ENCODE measurements at regions of chr6 and their contacts with region 1.

Region 1: GRCh38 chr6:26196846-26197648 is 109.8 kb downstream of the HFE start:
- DNase-seq: peak; percentile 75
- ATAC-seq: peak; percentile 41
- H3K4me3 ChIP-seq: peak overlapping the region; percentile 70 to 76
- H3K27ac ChIP-seq: peak overlapping the region; percentile 98
- H3K4me1 ChIP-seq: peaks cover 13 to 37% of the 10 kb centered on the region in 2 experiments
- H3K27me3 ChIP-seq: no peaks in the 10 kb centered on the region
- CTCF ChIP-seq: no peak
- POLR2A ChIP-seq: peak; percentile 92
- RAD21 ChIP-seq: no peak

Region 2: DNA sequence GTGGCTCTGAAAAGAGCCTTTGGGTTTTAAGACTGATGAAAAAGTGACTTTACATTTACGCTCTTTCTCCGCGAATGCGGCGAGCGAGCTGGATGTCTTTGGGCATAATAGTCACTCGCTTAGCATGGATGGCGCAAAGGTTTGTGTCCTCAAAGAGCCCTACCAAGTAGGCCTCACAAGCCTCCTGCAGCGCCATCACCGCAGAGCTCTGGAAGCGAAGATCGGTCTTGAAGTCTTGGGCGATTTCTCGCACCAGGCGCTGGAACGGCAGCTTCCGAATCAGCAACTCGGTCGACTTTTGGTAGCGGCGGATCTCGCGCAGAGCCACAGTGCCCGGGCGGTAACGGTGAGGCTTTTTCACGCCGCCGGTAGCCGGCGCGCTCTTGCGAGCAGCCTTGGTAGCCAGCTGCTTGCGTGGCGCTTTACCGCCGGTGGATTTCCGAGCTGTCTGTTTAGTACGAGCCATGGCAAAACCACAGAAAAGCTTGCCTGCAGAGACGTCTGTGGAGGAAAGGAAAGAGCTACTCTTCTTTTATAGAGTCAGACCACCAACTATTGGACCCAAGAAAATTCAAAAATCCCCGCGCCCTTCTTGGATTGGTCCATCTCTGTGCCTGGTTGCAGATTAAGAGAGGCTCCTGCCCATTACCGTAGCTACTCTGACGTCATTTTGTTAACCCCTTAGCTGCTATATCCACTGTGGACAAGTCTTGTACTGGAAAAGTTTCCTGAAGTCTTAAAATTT is 165.3 kb before region 1 on chr6:
- CTCF ChIA-PET with region 1: no interaction called
- POLR2A ChIA-PET with region 1: interaction called, 44 read pairs
- RAD21 ChIA-PET with region 1: no interaction called
- intact Hi-C with region 1: loop called (anchors 2 kb)
- DNase-seq: peak; percentile 99
- ATAC-seq: peak; percentile 66
- H3K4me3 ChIP-seq: peak overlapping the region; percentile 70 to 74
- H3K27ac ChIP-seq: peak overlapping the region; percentile 98
- H3K4me1 ChIP-seq: peaks cover 51 to 87% of the 10 kb centered on the region in 2 experiments
- H3K27me3 ChIP-seq: no peaks in the 10 kb centered on the region
- CTCF ChIP-seq: no peak
- POLR2A ChIP-seq: peak; percentile 99
- RAD21 ChIP-seq: peak; percentile 5; the same call in 1 of the 2 replicates

Region 3: GRCh38 chr6:26071135-26071534 is 125.9 kb before region 1 on chr6:
- CTCF ChIA-PET with region 1: no interaction called
- POLR2A ChIA-PET with region 1: no interaction called
- RAD21 ChIA-PET with region 1: no interaction called
- intact Hi-C with region 1: no loop called
- DNase-seq: no peak
- ATAC-seq: peak; percentile 85
- H3K4me3 ChIP-seq: peak overlapping the region in 1 of 2 experiments; percentile 25; a peak in 1 of 4 replicates
- H3K27ac ChIP-seq: no peak overlapping the region
- H3K4me1 ChIP-seq: peaks cover 16 to 29% of the 10 kb centered on the region in 2 experiments; a peak in 3 of 4 replicates
- H3K27me3 ChIP-seq: no peaks in the 10 kb centered on the region
- CTCF ChIP-seq: no peak
- POLR2A ChIP-seq: no peak
- RAD21 ChIP-seq: no peak

Region 4: DNA sequence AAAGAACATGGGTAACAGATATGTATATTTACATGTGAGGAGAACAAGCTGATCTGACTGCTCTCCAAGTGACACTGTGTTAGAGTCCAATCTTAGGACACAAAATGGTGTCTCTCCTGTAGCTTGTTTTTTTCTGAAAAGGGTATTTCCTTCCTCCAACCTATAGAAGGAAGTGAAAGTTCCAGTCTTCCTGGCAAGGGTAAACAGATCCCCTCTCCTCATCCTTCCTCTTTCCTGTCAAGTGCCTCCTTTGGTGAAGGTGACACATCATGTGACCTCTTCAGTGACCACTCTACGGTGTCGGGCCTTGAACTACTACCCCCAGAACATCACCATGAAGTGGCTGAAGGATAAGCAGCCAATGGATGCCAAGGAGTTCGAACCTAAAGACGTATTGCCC is 104.6 kb before region 1 on chr6:
- CTCF ChIA-PET with region 1: no interaction called
- POLR2A ChIA-PET with region 1: no interaction called
- RAD21 ChIA-PET with region 1: no interaction called
- intact Hi-C with region 1: no loop called
- DNase-seq: no peak
- ATAC-seq: no peak
- H3K4me3 ChIP-seq: no peak overlapping the region
- H3K27ac ChIP-seq: no peak overlapping the region
- H3K4me1 ChIP-seq: peaks cover 3 to 16% of the 10 kb centered on the region in 2 experiments; a peak in 2 of 4 replicates
- H3K27me3 ChIP-seq: no peaks in the 10 kb centered on the region
- CTCF ChIP-seq: no peak
- POLR2A ChIP-seq: no peak
- RAD21 ChIP-seq: no peak

Region 5: DNA sequence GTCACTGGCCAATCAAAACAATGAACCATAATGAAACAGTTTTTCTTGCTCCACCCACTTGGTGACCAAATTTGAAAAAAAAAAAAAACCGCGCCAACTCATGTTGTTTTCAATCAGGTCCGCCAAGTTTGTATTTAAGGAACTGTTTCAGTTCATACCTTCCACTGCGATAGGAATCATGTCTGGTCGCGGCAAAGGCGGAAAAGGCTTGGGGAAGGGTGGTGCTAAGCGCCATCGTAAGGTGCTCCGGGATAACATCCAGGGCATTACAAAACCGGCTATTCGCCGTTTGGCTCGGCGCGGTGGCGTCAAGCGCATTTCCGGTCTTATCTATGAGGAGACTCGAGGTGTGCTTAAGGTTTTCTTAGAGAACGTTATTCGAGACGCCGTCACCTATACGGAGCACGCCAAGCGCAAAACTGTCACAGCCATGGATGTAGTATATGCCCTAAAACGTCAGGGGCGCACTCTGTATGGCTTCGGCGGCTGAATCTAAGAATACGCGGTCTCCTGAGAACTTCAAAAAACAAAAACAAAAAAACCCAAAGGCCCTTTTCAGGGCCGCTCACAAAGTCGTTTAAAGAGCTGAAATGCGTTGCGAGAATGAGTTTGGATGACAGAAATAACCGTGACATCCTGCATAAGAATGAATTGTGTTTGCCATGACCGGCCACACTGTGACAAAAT is 93.1 kb before region 1 on chr6:
- CTCF ChIA-PET with region 1: no interaction called
- POLR2A ChIA-PET with region 1: interaction called, 13 read pairs
- RAD21 ChIA-PET with region 1: no interaction called
- intact Hi-C with region 1: no loop called
- DNase-seq: peak; percentile 95
- ATAC-seq: peak; percentile 74
- H3K4me3 ChIP-seq: peak overlapping the region; percentile 48 to 59
- H3K27ac ChIP-seq: peak overlapping the region; percentile 94
- H3K4me1 ChIP-seq: peaks cover 17 to 39% of the 10 kb centered on the region in 2 experiments
- H3K27me3 ChIP-seq: no peaks in the 10 kb centered on the region
- CTCF ChIP-seq: peak in 2 of 3 experiments; percentile 35 to 40; a peak in 2 of 6 replicates
- POLR2A ChIP-seq: peak; percentile 99
- RAD21 ChIP-seq: peak; percentile 42

Region 6: DNA sequence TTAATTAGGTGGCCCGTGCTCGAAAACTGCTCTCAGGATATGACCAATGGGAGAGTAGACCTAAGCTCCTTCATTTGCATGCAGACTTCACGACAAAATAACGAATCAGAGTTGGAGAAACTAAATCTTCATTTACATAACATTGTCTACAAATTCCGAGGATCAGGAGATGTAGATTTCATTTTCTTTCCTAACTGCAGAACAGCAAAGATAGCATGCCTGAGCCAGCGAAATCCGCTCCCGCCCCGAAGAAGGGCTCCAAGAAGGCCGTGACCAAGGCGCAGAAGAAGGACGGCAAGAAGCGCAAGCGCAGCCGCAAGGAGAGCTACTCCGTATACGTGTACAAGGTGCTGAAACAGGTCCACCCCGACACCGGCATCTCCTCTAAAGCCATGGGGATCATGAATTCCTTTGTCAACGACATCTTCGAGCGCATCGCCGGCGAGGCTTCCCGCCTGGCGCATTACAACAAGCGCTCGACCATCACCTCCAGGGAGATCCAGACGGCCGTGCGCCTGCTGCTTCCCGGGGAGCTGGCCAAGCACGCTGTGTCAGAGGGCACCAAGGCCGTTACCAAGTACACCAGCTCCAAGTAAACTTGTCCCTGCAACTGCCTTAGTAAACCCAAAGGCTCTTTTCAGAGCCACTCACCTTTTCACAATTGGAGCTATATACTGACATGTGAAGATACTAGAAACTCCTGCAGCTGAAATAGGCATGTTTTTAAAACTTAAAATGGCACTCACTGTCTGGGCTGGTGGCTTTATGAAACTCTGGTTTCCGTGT is 13.3 kb before region 1 on chr6:
- CTCF ChIA-PET with region 1: no interaction called
- POLR2A ChIA-PET with region 1: interaction called, 118 read pairs
- RAD21 ChIA-PET with region 1: no interaction called
- intact Hi-C with region 1: no loop called
- DNase-seq: no peak
- ATAC-seq: no peak
- H3K4me3 ChIP-seq: no peak overlapping the region
- H3K27ac ChIP-seq: no peak overlapping the region
- H3K4me1 ChIP-seq: peaks cover 3 to 14% of the 10 kb centered on the region in 2 experiments; a peak in 3 of 4 replicates
- H3K27me3 ChIP-seq: no peaks in the 10 kb centered on the region
- CTCF ChIP-seq: no peak
- POLR2A ChIP-seq: no peak
- RAD21 ChIP-seq: no peak

Region 7: DNA sequence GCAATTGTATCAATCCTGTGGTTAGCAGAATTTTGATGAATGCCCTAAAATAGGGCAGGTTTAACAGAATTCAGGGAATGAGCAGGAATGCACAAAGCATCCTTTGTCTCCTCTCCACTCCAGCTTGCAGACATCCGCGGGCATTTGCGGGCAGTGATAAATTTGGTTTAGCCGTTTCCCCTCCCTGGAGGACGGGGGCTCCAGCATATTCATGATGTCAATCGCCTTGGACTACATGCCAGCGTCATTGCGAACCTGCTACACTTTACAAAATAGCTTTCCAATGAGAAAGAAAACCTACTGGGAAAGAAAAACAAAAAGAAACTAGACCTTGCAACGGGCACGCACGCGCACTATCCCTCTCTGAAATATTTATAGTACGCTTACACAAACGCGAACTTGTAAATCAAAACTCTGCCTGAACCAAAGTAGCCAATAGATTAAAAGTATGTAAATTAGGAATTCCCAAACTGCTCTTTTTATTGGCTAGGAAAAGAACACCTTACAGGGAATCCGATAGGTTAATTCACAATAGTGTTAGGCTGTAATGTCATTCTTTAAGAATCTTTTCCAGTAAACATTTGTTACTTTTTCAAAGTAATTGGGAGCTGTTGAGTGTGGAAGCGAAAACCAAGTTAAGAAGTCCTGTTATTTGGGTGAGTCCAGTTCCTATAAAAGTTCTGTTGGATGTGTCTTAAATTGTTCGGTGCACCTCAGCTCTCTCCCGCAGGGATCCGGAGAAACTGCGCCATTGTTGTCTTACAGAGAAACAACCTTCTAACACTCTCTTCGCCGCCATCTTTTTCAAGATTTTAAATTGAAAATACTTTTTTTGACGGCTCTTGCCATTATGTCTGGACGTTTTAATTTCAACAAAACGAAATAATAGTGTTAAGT is 26.9 kb after region 1 on chr6:
- CTCF ChIA-PET with region 1: no interaction called
- POLR2A ChIA-PET with region 1: interaction called, 25 read pairs
- RAD21 ChIA-PET with region 1: no interaction called
- intact Hi-C with region 1: no loop called
- DNase-seq: peak; percentile 91
- ATAC-seq: peak; percentile 92
- H3K4me3 ChIP-seq: peak overlapping the region; percentile 59 to 71
- H3K27ac ChIP-seq: peak overlapping the region; percentile 90
- H3K4me1 ChIP-seq: peaks cover 11 to 29% of the 10 kb centered on the region in 2 experiments; a peak in 3 of 4 replicates
- H3K27me3 ChIP-seq: no peaks in the 10 kb centered on the region
- CTCF ChIP-seq: no peak
- POLR2A ChIP-seq: peak; percentile 30
- RAD21 ChIP-seq: no peak

Region 8: DNA sequence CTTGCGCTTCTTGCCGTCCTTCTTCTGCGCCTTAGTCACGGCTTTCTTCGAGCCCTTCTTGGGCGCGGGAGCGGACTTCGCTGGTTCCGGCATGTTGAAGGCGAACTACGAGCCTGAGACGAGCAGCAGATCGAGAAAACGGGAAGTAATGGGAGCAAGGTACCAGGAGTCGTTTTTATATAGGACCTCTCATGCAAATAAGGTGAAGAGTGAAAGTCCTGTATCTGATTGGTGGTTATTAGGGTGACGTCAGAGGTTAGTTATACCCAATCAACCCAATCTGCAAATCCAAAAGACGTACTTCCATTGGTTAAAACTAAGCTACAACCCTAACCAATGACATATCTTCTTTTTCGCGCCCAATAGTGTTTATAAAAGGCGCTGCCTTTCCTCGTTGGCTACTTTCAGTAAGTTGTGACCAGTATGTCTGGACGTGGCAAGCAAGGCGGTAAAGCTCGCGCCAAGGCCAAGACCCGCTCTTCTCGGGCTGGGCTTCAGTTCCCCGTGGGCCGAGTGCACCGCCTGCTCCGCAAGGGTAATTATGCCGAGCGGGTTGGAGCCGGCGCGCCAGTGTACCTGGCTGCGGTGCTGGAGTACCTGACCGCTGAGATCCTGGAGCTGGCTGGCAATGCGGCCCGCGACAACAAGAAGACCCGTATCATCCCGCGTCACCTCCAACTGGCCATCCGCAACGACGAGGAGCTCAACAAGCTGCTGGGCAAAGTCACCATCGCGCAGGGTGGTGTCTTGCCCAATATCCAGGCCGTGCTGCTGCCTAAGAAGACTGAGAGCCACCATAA is 949.9 kb after region 1 on chr6:
- CTCF ChIA-PET with region 1: no interaction called
- POLR2A ChIA-PET with region 1: interaction called, 54 read pairs
- RAD21 ChIA-PET with region 1: no interaction called
- intact Hi-C with region 1: loop called (anchors 5 kb)
- DNase-seq: peak; percentile 99
- ATAC-seq: peak; percentile 71
- H3K4me3 ChIP-seq: peak overlapping the region; percentile 69 to 70
- H3K27ac ChIP-seq: peak overlapping the region; percentile 97
- H3K4me1 ChIP-seq: peaks cover 26 to 55% of the 10 kb centered on the region in 2 experiments
- H3K27me3 ChIP-seq: no peaks in the 10 kb centered on the region
- CTCF ChIP-seq: no peak
- POLR2A ChIP-seq: peak; percentile 93
- RAD21 ChIP-seq: no peak